Activated naive CD4-positive, alpha-beta T cell treated with anti-CD3 and anti-CD28 coated beads, Interleukin-2, amount 10 ng/mL, durations not matched to agents 7 days and 5 days (primary cell): ENCODE measurements at regions of chr17 and their contacts with region 1.

Region 1: DNA sequence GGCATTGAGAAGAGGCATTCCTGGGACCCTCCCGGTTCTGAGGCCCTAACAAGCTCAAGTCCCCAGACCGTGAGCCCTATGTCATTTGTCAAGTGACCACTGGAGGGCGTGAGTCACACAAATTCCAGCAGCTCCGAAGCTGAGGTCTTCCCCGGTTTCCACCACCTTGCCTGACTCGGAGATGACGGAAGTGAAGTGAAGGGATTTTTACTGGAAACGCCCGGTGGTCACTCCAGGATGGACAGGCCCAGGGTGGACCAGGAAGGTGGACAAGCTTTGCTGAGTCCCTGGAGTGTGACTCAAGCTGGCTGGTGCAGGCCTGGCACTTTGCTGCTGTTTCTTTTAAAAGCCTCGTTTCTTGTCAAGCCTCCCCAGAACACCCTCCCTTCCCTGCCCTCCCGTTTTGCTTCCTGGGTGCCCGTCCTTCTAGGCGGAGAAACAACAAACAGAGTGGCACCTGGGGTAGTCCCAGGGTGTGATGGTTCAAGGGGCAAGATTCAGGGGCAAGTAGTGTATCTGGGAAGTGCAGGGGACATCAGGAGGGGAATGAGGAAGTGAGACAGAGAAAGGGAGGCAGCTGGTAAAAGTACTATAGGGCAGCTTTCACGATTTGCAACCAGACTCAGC is 5.3 kb upstream of the NOS2 start:
- DNase-seq: peak; percentile 91
- H3K4me3 Mint-ChIP-seq: peak overlapping the region; percentile 53
- H3K27ac Mint-ChIP-seq: peak overlapping the region; percentile 85
- H3K4me1 Mint-ChIP-seq: peaks cover 47% of the 10 kb centered on the region
- H3K27me3 Mint-ChIP-seq: peaks cover 13% of the 10 kb centered on the region

Region 2: GRCh38 chr17:27721797-27722196 is 83.8 kb before region 1 on chr17:
- CTCF ChIA-PET with region 1: no interaction called
- DNase-seq: no peak
- H3K4me3 Mint-ChIP-seq: no peak overlapping the region
- H3K27ac Mint-ChIP-seq: no peak overlapping the region
- H3K4me1 Mint-ChIP-seq: no peaks in the 10 kb centered on the region
- H3K27me3 Mint-ChIP-seq: no peaks in the 10 kb centered on the region

Region 3: DNA sequence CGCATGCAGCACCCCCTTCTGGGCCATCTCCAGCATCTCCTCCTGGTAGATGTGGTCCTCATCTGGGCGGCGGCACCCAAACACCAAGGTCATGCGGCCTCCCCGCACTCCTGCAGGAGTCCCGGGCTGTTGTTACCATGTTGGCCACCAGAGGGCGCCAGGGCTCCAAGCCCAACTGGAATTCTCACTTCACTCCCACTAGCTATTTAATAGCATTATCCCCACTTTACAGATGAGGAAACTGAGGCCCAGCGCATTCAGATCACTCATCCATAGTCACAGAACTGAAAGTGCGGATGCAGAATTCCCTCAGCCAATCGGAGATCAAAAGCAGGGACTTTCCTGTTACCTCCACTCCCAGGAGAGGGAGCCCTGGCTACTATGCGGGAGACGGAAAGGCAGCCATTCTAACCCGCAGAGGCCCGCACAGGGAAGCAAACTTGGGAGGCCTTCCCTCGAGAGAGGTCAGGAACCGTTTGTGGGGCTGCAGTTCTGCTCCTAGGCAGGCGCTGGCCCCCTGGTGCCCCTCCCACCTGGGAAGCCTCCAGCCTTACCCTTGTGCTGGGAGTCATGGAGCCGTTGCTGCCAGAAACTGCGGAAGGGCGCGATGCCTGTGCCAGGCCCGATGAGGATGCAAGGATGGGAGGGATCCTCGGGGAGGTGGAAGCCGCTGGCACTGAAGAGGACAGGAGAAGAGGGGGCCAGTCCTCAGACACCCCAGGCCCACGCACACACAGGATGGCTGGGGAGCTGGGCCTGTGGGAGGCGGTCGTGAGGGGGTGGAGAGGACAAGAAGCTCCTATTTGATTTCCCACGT is 45.4 kb before region 1 on chr17:
- CTCF ChIA-PET with region 1: interaction called, 14 read pairs
- DNase-seq: peak; percentile 79
- H3K4me3 Mint-ChIP-seq: no peak overlapping the region
- H3K27ac Mint-ChIP-seq: no peak overlapping the region
- H3K4me1 Mint-ChIP-seq: no peaks in the 10 kb centered on the region
- H3K27me3 Mint-ChIP-seq: peaks cover 6% of the 10 kb centered on the region

Region 4: DNA sequence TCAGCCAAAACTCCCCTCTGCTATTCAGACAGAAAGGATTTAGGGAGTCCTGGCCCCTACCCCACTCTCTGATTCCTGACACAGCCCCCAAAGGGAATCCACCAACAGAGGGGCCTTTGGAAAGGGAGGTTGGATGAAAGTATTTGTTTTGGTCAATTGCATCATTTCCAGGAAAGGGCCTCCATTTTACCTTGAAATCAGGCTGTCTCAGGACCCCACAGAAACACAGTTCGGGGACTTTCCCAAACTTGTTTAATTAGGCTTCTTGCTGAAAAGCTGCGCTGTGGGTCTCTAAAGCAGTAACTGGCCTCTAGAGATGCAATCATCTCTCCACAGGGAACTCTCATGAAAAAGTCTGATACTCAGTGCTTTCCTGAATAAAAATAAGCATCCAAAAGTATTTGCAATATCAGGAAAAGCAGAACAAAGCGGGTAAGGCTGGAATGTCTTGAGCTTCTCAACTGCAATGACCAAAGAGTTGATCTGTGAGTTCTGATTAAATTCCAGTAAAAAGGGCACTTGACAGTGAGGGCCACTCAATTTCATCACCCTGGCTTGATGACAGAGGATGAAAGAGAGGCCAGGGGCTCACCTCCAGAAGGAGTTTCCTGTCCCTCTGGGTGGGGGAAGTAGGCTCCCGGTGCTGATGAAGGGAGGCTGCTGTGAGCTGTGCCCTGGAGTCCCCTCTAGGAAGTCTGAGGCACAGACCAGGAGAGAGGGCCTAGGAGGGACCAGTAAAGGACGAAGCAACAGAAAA is 51.2 kb after region 1 on chr17:
- CTCF ChIA-PET with region 1: interaction called, 20 read pairs
- DNase-seq: no peak
- H3K4me3 Mint-ChIP-seq: no peak overlapping the region
- H3K27ac Mint-ChIP-seq: no peak overlapping the region
- H3K4me1 Mint-ChIP-seq: no peaks in the 10 kb centered on the region
- H3K27me3 Mint-ChIP-seq: peaks cover 8% of the 10 kb centered on the region

Region 5: DNA sequence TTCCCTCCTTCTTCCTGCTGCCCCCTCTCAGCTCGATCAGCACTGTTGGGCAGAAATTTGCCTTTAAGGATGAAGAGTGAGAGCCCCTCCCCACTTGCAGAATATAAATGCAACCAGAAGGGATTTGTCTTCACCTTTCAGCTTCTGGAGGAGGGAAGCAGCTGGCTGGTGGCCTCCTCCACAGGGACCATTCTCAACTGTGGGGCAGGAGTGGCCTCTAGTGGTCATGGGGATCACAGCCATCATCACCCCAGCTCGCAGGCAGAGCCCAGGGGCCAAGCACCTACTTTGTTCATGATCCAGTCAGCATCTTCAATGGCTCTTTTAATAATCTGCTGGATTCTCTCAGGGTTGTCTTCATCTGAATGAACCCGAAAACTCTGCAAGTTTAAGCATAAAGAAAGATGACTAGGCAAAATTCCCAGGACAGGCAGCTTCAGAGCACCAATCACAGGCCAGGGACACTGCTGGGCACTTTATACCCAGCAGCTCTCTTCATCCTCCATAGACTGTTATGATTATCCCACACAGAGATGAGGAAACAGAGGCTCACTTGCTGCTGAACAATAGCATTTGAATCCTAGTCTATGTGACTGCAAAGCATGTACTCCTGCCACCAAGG is 74.5 kb after region 1 on chr17:
- CTCF ChIA-PET with region 1: interaction called, 404 read pairs
- DNase-seq: peak; percentile 83
- H3K4me3 Mint-ChIP-seq: no peak overlapping the region
- H3K27ac Mint-ChIP-seq: no peak overlapping the region
- H3K4me1 Mint-ChIP-seq: peaks cover 26% of the 10 kb centered on the region
- H3K27me3 Mint-ChIP-seq: peaks cover 5% of the 10 kb centered on the region

Region 6: GRCh38 chr17:28252436-28252835 is 446.8 kb after region 1 on chr17:
- CTCF ChIA-PET with region 1: interaction called, 17 read pairs
- DNase-seq: no peak
- H3K4me3 Mint-ChIP-seq: no peak overlapping the region
- H3K27ac Mint-ChIP-seq: no peak overlapping the region
- H3K4me1 Mint-ChIP-seq: peaks cover 10% of the 10 kb centered on the region
- H3K27me3 Mint-ChIP-seq: peaks cover 63% of the 10 kb centered on the region